IMR-90 (cell line): ENCODE measurements at regions of chr10 and their contacts with region 1.

Region 1: DNA sequence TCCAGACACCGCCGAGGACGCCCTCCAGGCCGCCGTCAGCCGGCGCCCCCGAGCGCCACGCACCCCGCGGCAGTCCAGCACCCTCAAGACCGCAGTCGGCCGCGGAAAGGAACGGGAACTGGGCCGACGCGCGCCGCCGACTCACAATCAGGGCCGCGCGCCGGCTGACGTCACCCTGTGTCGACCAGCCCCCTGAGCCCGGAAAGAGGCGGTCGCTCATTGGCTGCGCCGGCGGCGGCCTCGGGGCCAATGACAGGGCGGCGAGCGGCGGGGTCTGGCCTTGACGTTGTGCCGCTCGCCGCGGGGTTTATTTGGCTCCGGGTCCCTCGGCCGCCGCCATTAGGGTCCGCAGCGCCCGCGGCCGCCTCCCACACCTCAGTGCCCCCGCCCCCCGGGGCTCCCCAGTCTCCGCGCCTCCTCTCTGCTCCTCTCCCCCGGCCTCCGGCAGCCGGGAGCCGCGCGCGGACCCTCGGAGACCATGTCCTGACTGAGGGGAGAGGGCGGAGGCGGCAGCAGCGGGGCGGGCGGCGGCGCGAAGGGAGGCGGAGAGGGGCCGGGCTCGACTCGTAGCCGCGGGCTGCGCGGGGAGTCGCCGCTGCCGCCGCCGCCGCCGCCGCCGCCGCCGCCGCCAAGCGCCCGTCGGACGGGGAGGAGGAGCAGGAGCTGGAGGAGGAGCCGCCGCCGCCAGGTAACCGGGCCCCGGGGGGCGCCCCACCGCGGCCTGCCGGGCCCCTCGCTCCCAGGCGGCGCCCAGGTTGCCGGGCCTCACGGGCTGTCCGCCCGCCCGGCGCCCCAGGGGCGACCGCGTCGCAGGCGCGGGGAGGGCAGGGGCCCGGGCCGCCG is 25.1 kb upstream of the ZRANB1 start:
- DNase-seq: peak; percentile 94
- ATAC-seq: peak; percentile 92
- H3K4me3 ChIP-seq: peak overlapping the region; percentile 75
- H3K27ac ChIP-seq: peak overlapping the region; percentile 96
- H3K4me1 ChIP-seq: peaks cover 10% of the 10 kb centered on the region
- H3K27me3 ChIP-seq: no peaks in the 10 kb centered on the region
- CTCF ChIP-seq: no peak
- POLR2A ChIP-seq: peak; percentile 92
- RAD21 ChIP-seq: no peak

Region 2: DNA sequence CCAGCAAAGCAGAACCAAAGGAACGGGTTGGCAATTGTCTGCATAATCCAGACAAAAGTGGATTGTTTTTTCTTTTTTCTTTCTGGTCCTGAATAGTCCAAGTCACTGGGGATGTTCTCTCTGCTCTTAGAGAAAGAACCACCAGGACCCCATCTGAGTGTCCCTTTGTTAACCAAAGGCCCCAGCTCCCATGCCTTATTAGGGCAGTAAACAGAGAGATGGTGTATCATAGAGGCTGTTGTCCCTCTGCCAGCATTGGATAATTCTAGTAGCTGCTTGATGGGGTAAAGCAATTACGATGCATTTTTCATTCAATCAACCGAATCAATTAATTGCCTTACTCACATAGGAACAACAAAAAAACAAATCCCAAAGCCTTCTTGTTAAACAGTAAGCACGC is 1549.6 kb before region 1 on chr10:
- CTCF ChIA-PET with region 1: no interaction called
- POLR2A ChIA-PET with region 1: no interaction called
- dilution Hi-C with region 1: no loop called
- in situ Hi-C with region 1: no loop called
- intact Hi-C with region 1: no loop called
- DNase-seq: no peak
- ATAC-seq: no peak
- H3K4me3 ChIP-seq: no peak overlapping the region
- H3K27ac ChIP-seq: no peak overlapping the region
- H3K4me1 ChIP-seq: no peaks in the 10 kb centered on the region
- H3K27me3 ChIP-seq: no peaks in the 10 kb centered on the region
- CTCF ChIP-seq: no peak
- POLR2A ChIP-seq: no peak
- RAD21 ChIP-seq: no peak

Region 3: GRCh38 chr10:124791378-124792348 is 125.1 kb before region 1 on chr10 and contains the start of gene EEF1AKMT2:
- CTCF ChIA-PET with region 1: interaction called, 3 read pairs
- POLR2A ChIA-PET with region 1: no interaction called
- dilution Hi-C with region 1: no loop called
- in situ Hi-C with region 1: no loop called
- intact Hi-C with region 1: loop called (anchors 2 kb)
- DNase-seq: peak; percentile 82
- ATAC-seq: peak; percentile 99
- H3K4me3 ChIP-seq: peak within 1 kb of the TSS; percentile 87
- H3K27ac ChIP-seq: peak within 1 kb of the TSS; percentile 84
- H3K4me1 ChIP-seq: no peaks in the 10 kb centered on the region; the same call in 1 of the 2 replicates
- H3K27me3 ChIP-seq: no peaks in the 10 kb centered on the region
- CTCF ChIP-seq: no peak
- POLR2A ChIP-seq: peak; percentile 82; the same call in 1 of the 2 replicates
- RAD21 ChIP-seq: no peak; the same call in 1 of the 2 replicates
- total RNA-seq, gene EEF1AKMT2: 9.7 and 22.8 TPM in 2 replicates

Region 4: GRCh38 chr10:124906551-124907001 is 10.2 kb before region 1 on chr10:
- CTCF ChIA-PET with region 1: no interaction called
- POLR2A ChIA-PET with region 1: interaction called, 5 read pairs
- dilution Hi-C with region 1: no loop called
- in situ Hi-C with region 1: no loop called
- intact Hi-C with region 1: loop called (anchors 1 kb)
- DNase-seq: peak; percentile 95
- ATAC-seq: peak; percentile 64
- H3K4me3 ChIP-seq: no peak overlapping the region
- H3K27ac ChIP-seq: peak overlapping the region; percentile 83
- H3K4me1 ChIP-seq: peaks cover 19% of the 10 kb centered on the region
- H3K27me3 ChIP-seq: no peaks in the 10 kb centered on the region
- CTCF ChIP-seq: no peak
- POLR2A ChIP-seq: no peak
- RAD21 ChIP-seq: no peak

Region 5: GRCh38 chr10:124943301-124944092 is 26.7 kb after region 1 on chr10:
- CTCF ChIA-PET with region 1: no interaction called
- POLR2A ChIA-PET with region 1: interaction called, 3 read pairs
- dilution Hi-C with region 1: no loop called
- in situ Hi-C with region 1: no loop called
- intact Hi-C with region 1: loop called (anchors 1 kb)
- DNase-seq: peak; percentile 95
- ATAC-seq: peak; percentile 66
- H3K4me3 ChIP-seq: no peak overlapping the region
- H3K27ac ChIP-seq: peak overlapping the region; percentile 92
- H3K4me1 ChIP-seq: peaks cover 17% of the 10 kb centered on the region
- H3K27me3 ChIP-seq: no peaks in the 10 kb centered on the region
- CTCF ChIP-seq: no peak
- POLR2A ChIP-seq: no peak
- RAD21 ChIP-seq: no peak

Region 6: DNA sequence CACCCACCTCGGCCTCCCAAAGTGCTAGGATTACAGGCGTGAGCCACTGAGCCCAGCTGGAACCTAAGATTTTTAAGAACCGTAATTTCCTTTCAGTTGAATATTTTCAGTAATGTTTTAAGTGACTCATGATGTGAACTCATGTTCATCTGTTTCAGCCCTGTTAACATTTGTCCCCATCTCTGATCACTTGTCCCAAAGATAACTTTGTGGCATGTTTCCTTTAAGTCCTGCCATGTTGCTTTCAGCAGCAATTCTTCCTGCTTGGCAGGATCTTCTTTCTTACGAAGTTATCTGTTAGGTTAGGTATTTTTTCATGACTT is 44.4 kb after region 1 on chr10:
- CTCF ChIA-PET with region 1: no interaction called
- POLR2A ChIA-PET with region 1: no interaction called
- dilution Hi-C with region 1: no loop called
- in situ Hi-C with region 1: no loop called
- intact Hi-C with region 1: loop called (anchors 5 kb)
- DNase-seq: peak; percentile 30
- ATAC-seq: no peak
- H3K4me3 ChIP-seq: no peak overlapping the region
- H3K27ac ChIP-seq: no peak overlapping the region
- H3K4me1 ChIP-seq: peaks cover 13% of the 10 kb centered on the region
- H3K27me3 ChIP-seq: no peaks in the 10 kb centered on the region
- CTCF ChIP-seq: no peak
- POLR2A ChIP-seq: no peak
- RAD21 ChIP-seq: no peak

Region 7: DNA sequence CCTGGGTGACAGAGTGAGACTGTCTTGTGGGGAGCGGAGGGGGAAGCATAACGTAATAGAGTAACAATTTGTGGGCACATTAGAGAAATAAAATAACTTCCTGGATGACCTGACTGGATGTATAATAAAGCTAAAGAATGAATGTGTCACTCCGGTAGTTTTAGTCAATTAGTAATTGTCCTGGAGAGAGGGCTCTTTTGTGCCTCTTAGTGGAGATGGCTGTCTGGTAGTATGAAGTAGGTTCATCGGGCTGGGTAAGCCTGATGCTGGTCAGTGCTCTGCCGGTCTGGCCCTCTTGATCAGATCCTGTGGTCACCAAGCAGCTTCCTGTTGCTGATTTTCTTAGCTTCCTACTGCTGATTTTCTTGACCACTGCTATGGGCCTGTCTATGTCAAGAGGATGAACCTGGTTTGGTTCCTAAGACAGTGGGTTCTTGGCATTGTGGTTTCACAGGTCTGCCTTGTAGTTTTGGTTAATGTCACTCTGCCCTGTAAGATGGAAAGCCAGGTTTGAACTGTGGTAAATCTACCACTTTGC is 59.2 kb after region 1 on chr10:
- CTCF ChIA-PET with region 1: no interaction called
- POLR2A ChIA-PET with region 1: no interaction called
- dilution Hi-C with region 1: no loop called
- in situ Hi-C with region 1: no loop called
- intact Hi-C with region 1: loop called (anchors 5 kb)
- DNase-seq: no peak
- ATAC-seq: no peak
- H3K4me3 ChIP-seq: no peak overlapping the region
- H3K27ac ChIP-seq: no peak overlapping the region
- H3K4me1 ChIP-seq: peaks cover 4% of the 10 kb centered on the region
- H3K27me3 ChIP-seq: no peaks in the 10 kb centered on the region
- CTCF ChIP-seq: no peak
- POLR2A ChIP-seq: no peak
- RAD21 ChIP-seq: no peak

Region 8: GRCh38 chr10:125060826-125061556 is 144.2 kb after region 1 on chr10:
- CTCF ChIA-PET with region 1: no interaction called
- POLR2A ChIA-PET with region 1: no interaction called
- dilution Hi-C with region 1: no loop called
- in situ Hi-C with region 1: no loop called
- intact Hi-C with region 1: loop called (anchors 10 kb)
- DNase-seq: peak; percentile 80
- ATAC-seq: peak; percentile 58
- H3K4me3 ChIP-seq: no peak overlapping the region
- H3K27ac ChIP-seq: peak overlapping the region; percentile 13; the same call in 1 of the 2 replicates
- H3K4me1 ChIP-seq: peaks cover 50% of the 10 kb centered on the region
- H3K27me3 ChIP-seq: no peaks in the 10 kb centered on the region
- CTCF ChIP-seq: peak; percentile 88
- POLR2A ChIP-seq: no peak
- RAD21 ChIP-seq: peak; percentile 84

Region 9: DNA sequence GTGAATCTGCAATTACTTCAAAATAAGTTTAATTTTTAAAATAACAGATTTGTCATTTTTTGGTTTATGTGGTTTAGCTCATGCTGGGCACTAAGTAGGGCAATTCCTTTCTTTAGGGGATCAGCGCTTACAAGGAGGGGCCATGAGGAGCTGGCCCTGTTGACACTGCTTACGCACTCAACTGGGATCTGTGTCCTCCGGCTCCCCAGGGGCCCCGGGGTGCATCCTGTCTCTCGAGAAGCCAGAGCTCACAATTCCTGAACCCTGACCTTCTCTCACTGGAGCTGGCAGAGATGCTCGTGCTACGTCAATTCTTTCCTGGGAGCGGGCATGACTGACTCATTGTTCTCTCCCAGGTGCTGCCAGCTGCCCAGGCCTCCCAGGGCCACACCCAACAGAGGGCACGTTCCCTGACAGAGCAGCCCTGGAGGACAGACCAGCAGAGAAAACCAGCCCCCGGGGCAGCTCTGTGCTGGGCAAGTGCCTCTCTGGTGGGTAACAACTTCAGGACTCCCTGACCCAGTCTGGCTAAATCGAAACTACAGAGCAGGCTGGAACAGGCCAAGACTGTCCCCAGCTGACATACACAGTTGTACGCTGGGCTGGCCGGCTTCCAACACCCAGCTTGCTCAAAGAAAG is 206.8 kb after region 1 on chr10:
- CTCF ChIA-PET with region 1: no interaction called
- POLR2A ChIA-PET with region 1: no interaction called
- dilution Hi-C with region 1: no loop called
- in situ Hi-C with region 1: no loop called
- intact Hi-C with region 1: no loop called
- DNase-seq: peak; percentile 69
- ATAC-seq: peak; percentile 79
- H3K4me3 ChIP-seq: no peak overlapping the region
- H3K27ac ChIP-seq: peak overlapping the region; percentile 64
- H3K4me1 ChIP-seq: peaks cover 33% of the 10 kb centered on the region
- H3K27me3 ChIP-seq: no peaks in the 10 kb centered on the region
- CTCF ChIP-seq: no peak
- POLR2A ChIP-seq: no peak
- RAD21 ChIP-seq: no peak